Activated CD4-positive, alpha-beta T cell treated with anti-CD3 and anti-CD28 coated beads, Interleukin-2, amount 10 ng/mL, durations not matched to agents 7 days and 5 days (primary cell): ENCODE measurements at regions of chr11 and their contacts with region 1.

Region 1: DNA sequence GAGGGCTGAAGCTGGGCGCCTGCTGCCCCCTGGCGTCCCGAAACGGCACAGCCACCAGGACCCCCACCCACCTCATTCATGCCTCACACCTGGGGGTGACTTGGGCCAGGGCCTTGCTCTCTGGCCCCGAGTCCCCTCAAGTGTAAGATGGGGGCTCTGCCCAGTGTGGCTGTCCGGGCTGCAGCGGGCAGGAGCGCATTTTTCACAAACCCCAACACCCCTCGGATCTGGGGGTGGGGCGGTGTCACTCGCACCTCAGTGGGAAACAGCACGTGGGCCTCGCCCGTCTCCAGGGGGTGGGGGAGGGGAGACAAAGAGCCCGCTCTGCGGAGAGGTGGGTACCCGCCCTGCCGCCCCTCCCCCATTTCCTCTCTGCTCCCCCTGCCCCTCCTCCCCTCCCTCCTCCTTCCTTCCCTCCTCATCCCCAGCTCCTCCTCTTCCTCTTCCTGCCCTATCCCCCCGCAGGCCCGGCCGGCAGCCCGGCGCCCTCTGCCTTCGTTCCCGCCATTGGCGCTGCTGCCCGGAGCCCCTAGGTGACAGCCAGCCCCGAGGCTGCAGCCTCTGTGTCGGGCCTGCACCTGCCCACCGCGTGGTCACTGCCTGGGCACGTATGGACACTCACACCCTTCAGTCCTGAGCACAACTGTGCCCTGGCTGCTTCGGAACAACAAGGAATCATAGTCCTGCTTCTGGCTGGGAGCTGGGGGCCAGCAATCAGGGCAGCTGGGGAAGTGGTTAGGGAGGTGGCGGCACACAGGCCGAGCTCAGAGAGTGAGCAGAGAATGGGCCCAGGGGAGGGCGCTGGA is 6.8 kb upstream of the CDKN1C start:
- DNase-seq: peak; percentile 84
- H3K4me3 Mint-ChIP-seq: peak overlapping the region; percentile 80
- H3K27ac Mint-ChIP-seq: peak overlapping the region; percentile 85
- H3K4me1 Mint-ChIP-seq: peaks cover 25% of the 10 kb centered on the region
- H3K27me3 Mint-ChIP-seq: peaks cover under 1% of the 10 kb centered on the region

Region 2: GRCh38 chr11:2930704-2931428 is 38.4 kb after region 1 on chr11:
- CTCF ChIA-PET with region 1: interaction called, 15 read pairs
- POLR2A ChIA-PET with region 1: interaction called, 3 read pairs
- DNase-seq: peak; percentile 50
- H3K4me3 Mint-ChIP-seq: peak overlapping the region; percentile 53
- H3K27ac Mint-ChIP-seq: no peak overlapping the region
- H3K4me1 Mint-ChIP-seq: peaks cover 36% of the 10 kb centered on the region
- H3K27me3 Mint-ChIP-seq: peaks cover 30% of the 10 kb centered on the region

Region 3: GRCh38 chr11:3028813-3029212 is 136.4 kb after region 1 on chr11:
- CTCF ChIA-PET with region 1: no interaction called
- POLR2A ChIA-PET with region 1: no interaction called
- DNase-seq: no peak
- H3K4me3 Mint-ChIP-seq: no peak overlapping the region
- H3K27ac Mint-ChIP-seq: no peak overlapping the region
- H3K4me1 Mint-ChIP-seq: peaks cover 33% of the 10 kb centered on the region
- H3K27me3 Mint-ChIP-seq: no peaks in the 10 kb centered on the region

Region 4: GRCh38 chr11:3123761-3124733 is 231.6 kb after region 1 on chr11:
- CTCF ChIA-PET with region 1: no interaction called
- POLR2A ChIA-PET with region 1: no interaction called
- DNase-seq: no peak
- H3K4me3 Mint-ChIP-seq: no peak overlapping the region
- H3K27ac Mint-ChIP-seq: no peak overlapping the region
- H3K4me1 Mint-ChIP-seq: no peaks in the 10 kb centered on the region
- H3K27me3 Mint-ChIP-seq: no peaks in the 10 kb centered on the region